Esophagus muscularis mucosa (tissue), 4 donors: ENCODE measurements at regions of chr14 and their contacts with region 1.

Region 1: GRCh38 chr14:77014004-77014604 is 14.4 kb downstream of the IRF2BPL start:
- DNase-seq: no peak
- H3K4me3 ChIP-seq: no peak overlapping the region
- H3K27ac ChIP-seq: peak overlapping the region in 3 of 4 donors; percentile 48 to 55 (median 55)
- H3K4me1 ChIP-seq: peaks cover 13 to 31% (median 20%) of the 10 kb centered on the region in 4 donors
- H3K27me3 ChIP-seq: peaks cover 0 to 3% (median 0%) of the 10 kb centered on the region in 4 donors
- CTCF ChIP-seq: no peak
- EP300 ChIP-seq: no peak
- POLR2A ChIP-seq: no peak

Region 2: GRCh38 chr14:76968621-76969063 is 45.5 kb before region 1 on chr14:
- intact Hi-C with region 1: loop called (anchors 5 kb)
- DNase-seq: no peak
- H3K4me3 ChIP-seq: no peak overlapping the region
- H3K27ac ChIP-seq: no peak overlapping the region
- H3K4me1 ChIP-seq: no peaks in the 10 kb centered on the region
- H3K27me3 ChIP-seq: no peaks in the 10 kb centered on the region
- CTCF ChIP-seq: no peak
- EP300 ChIP-seq: no peak
- POLR2A ChIP-seq: no peak